ENCODE measurements at regions of chr15 and their contacts with region 1.

Region 1: DNA sequence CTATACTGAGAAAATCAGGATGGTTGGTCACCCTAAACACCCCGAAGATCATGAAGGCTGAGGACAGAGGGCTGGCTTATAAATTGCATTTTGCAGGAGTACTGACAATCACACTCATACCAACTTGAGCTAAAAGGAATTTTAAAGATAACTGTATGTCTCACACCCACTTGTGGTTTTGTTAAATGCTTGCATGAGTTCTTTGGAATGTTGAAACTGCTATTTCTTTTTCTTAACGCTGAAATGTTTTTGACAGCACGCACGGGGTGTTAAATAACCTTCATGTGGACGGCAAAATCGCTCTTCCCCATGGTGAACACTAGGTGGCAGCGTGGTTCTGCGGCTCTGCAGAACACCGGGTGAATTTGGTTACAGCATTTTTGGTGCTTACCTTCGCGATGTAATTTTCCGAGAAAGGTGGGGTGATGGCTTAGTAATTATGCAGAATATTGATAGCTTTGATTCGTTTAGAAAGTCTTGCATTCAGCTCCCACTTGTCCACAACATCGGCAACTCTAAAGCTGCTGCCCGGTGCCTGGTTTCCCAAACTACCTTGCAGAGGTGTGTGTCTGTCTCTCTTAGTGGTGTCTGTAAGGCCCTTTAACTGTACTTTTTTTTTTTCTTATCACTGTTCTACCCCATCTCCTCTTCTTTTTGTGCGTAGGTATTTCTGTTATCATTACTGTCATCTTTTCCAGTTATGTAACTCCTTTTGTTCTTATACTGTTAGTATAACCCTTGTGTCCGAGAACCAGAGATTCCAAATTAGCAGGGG is 51.7 kb downstream of the ARNT2 start:
- DNase-seq: peak; percentile 21 to 76 (median 50)
- ATAC-seq: peak; percentile 31
- H3K4me3 ChIP-seq: no peak overlapping the region
- H3K4me3 Mint-ChIP-seq: no peak overlapping the region
- H3K27ac ChIP-seq: no peak overlapping the region
- H3K27ac Mint-ChIP-seq: no peak overlapping the region
- H3K4me1 ChIP-seq: no peaks in the 10 kb centered on the region
- H3K4me1 Mint-ChIP-seq: peaks cover 2% of the 10 kb centered on the region
- H3K27me3 ChIP-seq: no peaks in the 10 kb centered on the region
- H3K27me3 Mint-ChIP-seq: peaks cover 20% of the 10 kb centered on the region
- CTCF ChIP-seq: peak; percentile 91

Region 2: DNA sequence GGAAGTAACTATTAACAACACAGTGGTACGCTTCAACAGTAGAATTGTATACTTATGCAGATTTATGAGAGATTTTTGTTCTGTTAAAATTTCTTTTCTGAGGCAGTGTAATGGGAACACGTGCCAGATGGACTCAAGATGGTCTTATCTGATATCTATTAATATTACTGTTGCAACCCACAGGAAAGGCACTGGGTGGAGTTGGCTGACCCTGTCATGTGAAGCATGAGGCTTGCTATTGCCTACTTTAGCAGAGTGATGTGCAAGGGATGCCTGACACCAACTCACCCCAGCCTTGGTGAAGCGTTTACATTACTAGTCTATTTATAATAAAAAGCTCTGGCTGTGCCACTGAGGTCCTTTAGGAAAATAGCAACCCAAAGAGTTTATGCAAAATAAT is 71.4 kb before region 1 on chr15:
- CTCF ChIA-PET with region 1: no interaction called
- POLR2A ChIA-PET with region 1: no interaction called
- intact Hi-C with region 1: no loop called
- DNase-seq: no peak
- ATAC-seq: no peak
- H3K4me3 ChIP-seq: no peak overlapping the region
- H3K4me3 Mint-ChIP-seq: no peak overlapping the region
- H3K27ac ChIP-seq: no peak overlapping the region
- H3K27ac Mint-ChIP-seq: no peak overlapping the region
- H3K4me1 ChIP-seq: no peaks in the 10 kb centered on the region
- H3K4me1 Mint-ChIP-seq: no peaks in the 10 kb centered on the region
- H3K27me3 ChIP-seq: no peaks in the 10 kb centered on the region
- H3K27me3 Mint-ChIP-seq: peaks cover 23% of the 10 kb centered on the region
- CTCF ChIP-seq: no peak

Region 3: GRCh38 chr15:80445300-80446041 is 10.4 kb before region 1 on chr15:
- CTCF ChIA-PET with region 1: interaction called, 11 read pairs
- POLR2A ChIA-PET with region 1: no interaction called
- intact Hi-C with region 1: no loop called
- DNase-seq: no peak
- ATAC-seq: no peak
- H3K4me3 ChIP-seq: no peak overlapping the region
- H3K4me3 Mint-ChIP-seq: no peak overlapping the region
- H3K27ac ChIP-seq: no peak overlapping the region
- H3K27ac Mint-ChIP-seq: no peak overlapping the region
- H3K4me1 ChIP-seq: no peaks in the 10 kb centered on the region
- H3K4me1 Mint-ChIP-seq: no peaks in the 10 kb centered on the region
- H3K27me3 ChIP-seq: peaks cover 0 to 11% of the 10 kb centered on the region in 2 experiments
- H3K27me3 Mint-ChIP-seq: peaks cover 14% of the 10 kb centered on the region
- CTCF ChIP-seq: no peak

Region 4: GRCh38 chr15:80468796-80469195 is 12.9 kb after region 1 on chr15:
- CTCF ChIA-PET with region 1: interaction called, 11 read pairs
- POLR2A ChIA-PET with region 1: no interaction called
- intact Hi-C with region 1: no loop called
- DNase-seq: no peak
- ATAC-seq: no peak
- H3K4me3 ChIP-seq: no peak overlapping the region
- H3K4me3 Mint-ChIP-seq: no peak overlapping the region
- H3K27ac ChIP-seq: no peak overlapping the region
- H3K27ac Mint-ChIP-seq: no peak overlapping the region
- H3K4me1 ChIP-seq: no peaks in the 10 kb centered on the region
- H3K4me1 Mint-ChIP-seq: no peaks in the 10 kb centered on the region
- H3K27me3 ChIP-seq: no peaks in the 10 kb centered on the region
- H3K27me3 Mint-ChIP-seq: peaks cover 33% of the 10 kb centered on the region
- CTCF ChIP-seq: no peak

Region 5: DNA sequence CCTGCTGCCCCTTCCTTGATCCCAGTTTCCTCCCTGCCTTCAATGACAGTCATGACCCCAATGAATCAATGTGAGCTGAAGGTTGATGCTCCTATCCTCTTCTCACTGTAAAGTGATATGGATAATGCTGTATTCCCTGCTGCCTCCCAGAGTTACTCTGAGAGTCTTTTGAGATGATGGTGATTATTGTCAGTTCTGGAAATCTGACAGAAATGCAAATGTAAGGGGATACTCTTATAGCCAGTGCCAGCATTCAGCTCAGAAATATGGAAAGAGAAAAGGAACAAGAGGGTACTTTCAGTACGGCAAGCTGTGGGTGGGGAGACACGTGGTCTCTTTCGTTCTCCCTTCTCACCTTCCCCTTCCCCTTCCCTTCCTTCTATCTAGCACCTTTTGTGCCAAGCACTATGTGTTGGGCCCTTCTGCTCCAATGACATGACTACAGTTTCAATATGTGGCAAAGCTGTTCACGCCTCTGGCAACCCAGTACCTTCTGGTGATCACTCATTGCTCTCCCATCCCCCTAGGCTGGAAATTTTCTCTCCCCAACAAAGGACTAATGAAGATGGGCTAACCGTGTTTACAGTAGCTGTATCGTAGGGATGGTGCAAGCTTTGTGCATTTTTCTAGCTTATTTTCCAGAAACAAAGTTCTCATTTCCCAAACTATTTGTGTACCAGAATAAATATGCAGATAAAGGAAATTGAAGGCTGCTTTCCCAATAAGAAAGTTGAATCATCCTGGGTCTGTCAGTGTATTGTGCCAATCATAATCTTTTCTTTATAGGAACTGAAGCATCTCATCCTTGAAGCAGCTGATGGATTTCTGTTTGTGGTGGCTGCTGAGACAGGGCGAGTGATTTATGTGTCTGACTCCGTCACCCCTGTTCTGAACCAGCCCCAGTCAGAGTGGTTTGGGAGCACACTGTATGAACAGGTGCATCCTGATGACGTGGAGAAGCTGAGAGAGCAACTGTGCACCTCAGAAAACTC is 18.7 kb after region 1 on chr15:
- CTCF ChIA-PET with region 1: interaction called, 11 read pairs
- POLR2A ChIA-PET with region 1: no interaction called
- intact Hi-C with region 1: no loop called
- DNase-seq: no peak
- ATAC-seq: no peak
- H3K4me3 ChIP-seq: no peak overlapping the region
- H3K4me3 Mint-ChIP-seq: no peak overlapping the region
- H3K27ac ChIP-seq: no peak overlapping the region
- H3K27ac Mint-ChIP-seq: no peak overlapping the region
- H3K4me1 ChIP-seq: no peaks in the 10 kb centered on the region
- H3K4me1 Mint-ChIP-seq: no peaks in the 10 kb centered on the region
- H3K27me3 ChIP-seq: no peaks in the 10 kb centered on the region
- H3K27me3 Mint-ChIP-seq: peaks cover 24% of the 10 kb centered on the region
- CTCF ChIP-seq: no peak

Region 6: DNA sequence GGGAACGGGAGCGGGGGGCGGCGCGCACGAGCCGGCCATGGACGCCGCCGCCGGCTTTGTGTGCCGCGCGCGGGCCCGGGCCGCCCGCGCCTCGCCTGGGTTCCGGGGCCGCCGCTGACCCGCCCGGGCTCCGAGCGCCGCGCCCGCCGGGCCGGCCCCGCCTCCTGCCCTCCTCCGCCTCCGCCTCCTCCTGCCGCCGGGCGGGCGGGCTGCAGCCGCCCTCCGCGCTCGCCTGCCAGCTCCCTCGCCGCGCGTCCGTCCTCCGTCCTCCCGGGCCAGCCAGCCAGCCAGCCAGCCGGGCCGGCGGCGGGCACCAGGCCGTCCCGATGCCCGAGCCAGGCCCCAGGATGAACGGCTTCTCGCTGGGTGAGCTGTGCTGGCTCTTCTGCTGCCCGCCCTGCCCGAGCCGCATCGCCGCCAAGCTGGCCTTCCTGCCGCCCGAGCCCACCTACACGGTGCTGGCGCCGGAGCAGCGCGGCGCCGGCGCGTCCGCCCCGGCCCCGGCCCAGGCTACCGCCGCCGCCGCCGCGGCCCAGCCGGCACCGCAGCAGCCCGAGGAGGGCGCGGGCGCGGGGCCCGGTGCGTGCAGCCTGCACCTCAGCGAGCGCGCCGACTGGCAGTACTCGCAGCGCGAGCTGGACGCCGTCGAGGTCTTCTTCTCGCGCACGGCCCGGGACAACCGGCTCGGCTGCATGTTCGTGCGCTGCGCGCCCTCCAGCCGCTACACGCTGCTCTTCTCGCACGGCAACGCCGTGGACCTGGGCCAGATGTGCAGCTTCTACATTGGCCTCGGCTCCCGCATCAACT is 239.5 kb after region 1 on chr15 and contains the start of gene ABHD17C:
- CTCF ChIA-PET with region 1: no interaction called
- POLR2A ChIA-PET with region 1: no interaction called
- intact Hi-C with region 1: no loop called
- DNase-seq: peak in 8 of 9 experiments; percentile 14 to 70 (median 42)
- ATAC-seq: peak; percentile 69
- H3K4me3 ChIP-seq: peak within 1 kb of the TSS; percentile 58 to 63
- H3K4me3 Mint-ChIP-seq: peak within 1 kb of the TSS; percentile 95
- H3K27ac ChIP-seq: peak within 1 kb of the TSS; percentile 20 to 57
- H3K27ac Mint-ChIP-seq: peak within 1 kb of the TSS; percentile 86
- H3K4me1 ChIP-seq: peaks cover 11% of the 10 kb centered on the region
- H3K4me1 Mint-ChIP-seq: peaks cover 23% of the 10 kb centered on the region
- H3K27me3 ChIP-seq: no peaks in the 10 kb centered on the region
- H3K27me3 Mint-ChIP-seq: peaks cover 3% of the 10 kb centered on the region
- CTCF ChIP-seq: no peak
- total RNA-seq, gene ABHD17C: 0.75 to 1.1 TPM

Region 7: GRCh38 chr15:80776420-80777045 is 320.7 kb after region 1 on chr15:
- CTCF ChIA-PET with region 1: interaction called, 90 read pairs
- POLR2A ChIA-PET with region 1: no interaction called
- intact Hi-C with region 1: loop called (anchors 1 kb)
- DNase-seq: peak; percentile 19 to 76 (median 56)
- ATAC-seq: no peak
- H3K4me3 ChIP-seq: no peak overlapping the region
- H3K4me3 Mint-ChIP-seq: no peak overlapping the region
- H3K27ac ChIP-seq: no peak overlapping the region
- H3K27ac Mint-ChIP-seq: no peak overlapping the region
- H3K4me1 ChIP-seq: peaks cover 11% of the 10 kb centered on the region
- H3K4me1 Mint-ChIP-seq: peaks cover 3% of the 10 kb centered on the region
- H3K27me3 ChIP-seq: peaks cover 9 to 18% of the 10 kb centered on the region in 2 experiments
- H3K27me3 Mint-ChIP-seq: peaks cover 27% of the 10 kb centered on the region
- CTCF ChIP-seq: peak; percentile 73

Region 8: GRCh38 chr15:80970018-80970658 is 514.3 kb after region 1 on chr15:
- CTCF ChIA-PET with region 1: interaction called, 86 read pairs
- POLR2A ChIA-PET with region 1: no interaction called
- intact Hi-C with region 1: loop called in 1 of 2 experiments (anchors 1 kb)
- DNase-seq: peak; percentile 22 to 75 (median 61)
- ATAC-seq: peak; percentile 69
- H3K4me3 ChIP-seq: no peak overlapping the region
- H3K4me3 Mint-ChIP-seq: no peak overlapping the region
- H3K27ac ChIP-seq: no peak overlapping the region
- H3K27ac Mint-ChIP-seq: no peak overlapping the region
- H3K4me1 ChIP-seq: no peaks in the 10 kb centered on the region
- H3K4me1 Mint-ChIP-seq: peaks cover 8% of the 10 kb centered on the region
- H3K27me3 ChIP-seq: no peaks in the 10 kb centered on the region
- H3K27me3 Mint-ChIP-seq: no peaks in the 10 kb centered on the region
- CTCF ChIP-seq: peak; percentile 92

Region 9: GRCh38 chr15:81106560-81106959 is 650.7 kb after region 1 on chr15:
- CTCF ChIA-PET with region 1: no interaction called
- POLR2A ChIA-PET with region 1: no interaction called
- intact Hi-C with region 1: loop called in 1 of 2 experiments (anchors 10 kb)
- DNase-seq: peak in 5 of 9 experiments; percentile 32 to 67 (median 45)
- ATAC-seq: no peak
- H3K4me3 ChIP-seq: no peak overlapping the region
- H3K4me3 Mint-ChIP-seq: no peak overlapping the region
- H3K27ac ChIP-seq: no peak overlapping the region
- H3K27ac Mint-ChIP-seq: no peak overlapping the region
- H3K4me1 ChIP-seq: no peaks in the 10 kb centered on the region
- H3K4me1 Mint-ChIP-seq: no peaks in the 10 kb centered on the region
- H3K27me3 ChIP-seq: no peaks in the 10 kb centered on the region
- H3K27me3 Mint-ChIP-seq: peaks cover 23% of the 10 kb centered on the region
- CTCF ChIP-seq: peak; percentile 69